OCI-LY7 (cell line): ENCODE measurements at regions of chr15 and their contacts with region 1.

Region 1: GRCh38 chr15:90716976-90717821 is at the start of gene BLM:
- DNase-seq: peak; percentile 98
- H3K4me3 ChIP-seq: peak within 1 kb of the TSS; percentile 96
- H3K27ac ChIP-seq: peak within 1 kb of the TSS; percentile 88
- H3K4me1 ChIP-seq: peaks cover 26% of the 10 kb centered on the region
- CTCF ChIP-seq: 0 out of 2 replicates have a peak, but pooled peaks have one; percentile 21
- total RNA-seq, gene BLM: 47.1 and 52.8 TPM in 2 replicates

Region 2: DNA sequence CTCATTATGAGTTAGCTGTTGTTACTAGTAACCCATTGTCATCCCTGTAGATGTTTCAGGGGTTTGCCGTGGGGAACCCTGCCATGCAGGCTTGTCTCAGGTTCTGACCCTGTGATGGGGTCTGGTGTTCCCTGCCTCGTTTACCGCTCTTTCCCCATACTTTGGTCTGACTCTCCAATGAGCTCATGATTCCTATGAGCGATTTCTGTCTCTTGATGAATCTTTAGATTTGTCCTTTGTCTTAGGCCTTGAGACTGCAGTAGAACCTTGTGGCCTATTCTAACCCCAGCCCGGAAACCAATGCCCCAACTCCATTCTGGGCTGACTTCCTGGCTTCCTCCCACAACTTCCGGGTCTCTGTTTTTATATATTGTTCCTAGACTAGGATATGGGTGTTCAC is 340.4 kb before region 1 on chr15:
- CTCF ChIA-PET with region 1: no interaction called
- POLR2A ChIA-PET with region 1: no interaction called
- intact Hi-C with region 1: no loop called
- DNase-seq: peak; percentile 33
- H3K4me3 ChIP-seq: no peak overlapping the region
- H3K27ac ChIP-seq: no peak overlapping the region
- H3K4me1 ChIP-seq: peaks cover 10% of the 10 kb centered on the region
- CTCF ChIP-seq: no peak

Region 3: GRCh38 chr15:90780916-90781315 is 63.7 kb after region 1 on chr15:
- CTCF ChIA-PET with region 1: no interaction called
- POLR2A ChIA-PET with region 1: interaction called, 10 read pairs
- intact Hi-C with region 1: loop called (anchors 1 kb)
- DNase-seq: peak; percentile 69
- H3K4me3 ChIP-seq: peak overlapping the region; percentile 28
- H3K27ac ChIP-seq: peak overlapping the region; percentile 77
- H3K4me1 ChIP-seq: peaks cover 67% of the 10 kb centered on the region
- CTCF ChIP-seq: no peak